HepG2 (cell line): ENCODE measurements at regions of chr4 and their contacts with region 1.

Region 1: GRCh38 chr4:73156394-73156793 is 86.9 kb upstream of the COX18 start:
- DNase-seq: no peak
- ATAC-seq: no peak
- H3K4me3 ChIP-seq: no peak overlapping the region
- H3K27ac ChIP-seq: no peak overlapping the region
- H3K4me1 ChIP-seq: no peaks in the 10 kb centered on the region
- H3K27me3 ChIP-seq: no peaks in the 10 kb centered on the region
- CTCF ChIP-seq: no peak
- EP300 ChIP-seq: no peak
- POLR2A ChIP-seq: no peak
- RAD21 ChIP-seq: no peak

Region 2: GRCh38 chr4:73127839-73128453 is 28.4 kb before region 1 on chr4:
- CTCF ChIA-PET with region 1: no interaction called
- POLR2A ChIA-PET with region 1: no interaction called
- in situ Hi-C with region 1: no loop called
- intact Hi-C with region 1: loop called (anchors 5 kb)
- DNase-seq: peak; percentile 9
- ATAC-seq: peak; percentile 96
- H3K4me3 ChIP-seq: no peak overlapping the region
- H3K27ac ChIP-seq: no peak overlapping the region
- H3K4me1 ChIP-seq: no peaks in the 10 kb centered on the region
- H3K27me3 ChIP-seq: no peaks in the 10 kb centered on the region
- CTCF ChIP-seq: no peak
- EP300 ChIP-seq: no peak
- POLR2A ChIP-seq: no peak
- RAD21 ChIP-seq: no peak

Region 3: DNA sequence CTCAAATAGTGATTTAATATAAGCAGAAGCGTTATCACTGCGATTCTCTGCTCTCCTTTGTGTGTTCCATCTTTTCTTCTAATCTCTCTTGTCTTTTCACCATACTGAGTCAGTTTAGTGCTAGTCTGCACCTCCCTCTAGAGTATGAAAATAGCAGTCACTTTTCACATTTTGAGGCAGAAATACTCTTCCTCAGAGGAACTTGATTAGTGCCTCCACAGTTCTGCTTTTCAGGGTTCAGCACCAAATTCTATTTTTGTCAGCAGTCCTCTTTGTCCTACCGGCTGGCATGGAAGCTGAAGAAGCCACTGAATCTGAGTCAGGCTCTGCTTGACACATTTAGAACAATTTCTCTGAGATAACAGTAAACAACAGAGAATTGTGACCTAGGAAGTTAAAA is 151.9 kb after region 1 on chr4:
- CTCF ChIA-PET with region 1: no interaction called
- POLR2A ChIA-PET with region 1: no interaction called
- in situ Hi-C with region 1: no loop called
- intact Hi-C with region 1: no loop called
- DNase-seq: peak; percentile 24
- ATAC-seq: peak; percentile 87
- H3K4me3 ChIP-seq: no peak overlapping the region
- H3K27ac ChIP-seq: no peak overlapping the region
- H3K4me1 ChIP-seq: peaks cover 23% of the 10 kb centered on the region
- H3K27me3 ChIP-seq: no peaks in the 10 kb centered on the region
- CTCF ChIP-seq: peak; percentile 73
- EP300 ChIP-seq: no peak
- POLR2A ChIP-seq: no peak
- RAD21 ChIP-seq: 0 out of 2 replicates have a peak, but pooled peaks have one; percentile 22

Region 4: DNA sequence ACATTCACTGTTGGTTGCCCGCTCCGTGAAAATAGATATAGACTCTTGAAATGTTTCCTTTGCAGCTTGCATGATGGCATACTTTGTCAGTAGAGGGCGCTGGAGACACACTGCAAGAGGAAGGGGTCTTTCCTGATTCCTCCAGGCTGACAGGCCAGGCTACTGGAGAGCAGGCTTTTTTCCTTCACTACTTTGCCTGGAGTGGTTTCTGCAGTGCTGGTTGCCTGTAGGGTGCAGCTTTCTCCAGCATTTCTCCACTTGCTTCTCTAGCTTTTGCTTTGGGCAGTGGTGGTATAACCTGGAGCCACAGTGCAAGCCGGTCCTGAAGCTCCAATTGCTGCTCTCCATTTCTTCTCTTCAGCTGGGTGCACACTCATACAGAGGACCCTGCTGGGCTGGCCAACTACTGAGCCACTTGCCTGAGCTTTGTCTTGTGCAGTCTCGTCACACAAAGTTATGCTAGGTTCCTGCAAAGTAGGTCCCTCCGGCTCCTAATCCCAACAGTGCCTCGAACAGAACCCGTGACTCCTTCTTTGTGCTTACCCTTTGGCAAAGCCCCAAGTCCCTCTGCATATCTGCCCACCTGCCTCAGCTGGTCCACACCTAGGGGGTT is 417.5 kb after region 1 on chr4:
- CTCF ChIA-PET with region 1: no interaction called
- POLR2A ChIA-PET with region 1: no interaction called
- in situ Hi-C with region 1: no loop called
- intact Hi-C with region 1: no loop called
- DNase-seq: peak; percentile 79
- ATAC-seq: peak; percentile 97
- H3K4me3 ChIP-seq: no peak overlapping the region
- H3K27ac ChIP-seq: no peak overlapping the region
- H3K4me1 ChIP-seq: no peaks in the 10 kb centered on the region
- H3K27me3 ChIP-seq: no peaks in the 10 kb centered on the region
- CTCF ChIP-seq: peak; percentile 92
- EP300 ChIP-seq: no peak
- POLR2A ChIP-seq: no peak
- RAD21 ChIP-seq: peak; percentile 89